Aorta (tissue), 5 donors: ENCODE measurements at regions of chr15 and their contacts with region 1.

Region 1: DNA sequence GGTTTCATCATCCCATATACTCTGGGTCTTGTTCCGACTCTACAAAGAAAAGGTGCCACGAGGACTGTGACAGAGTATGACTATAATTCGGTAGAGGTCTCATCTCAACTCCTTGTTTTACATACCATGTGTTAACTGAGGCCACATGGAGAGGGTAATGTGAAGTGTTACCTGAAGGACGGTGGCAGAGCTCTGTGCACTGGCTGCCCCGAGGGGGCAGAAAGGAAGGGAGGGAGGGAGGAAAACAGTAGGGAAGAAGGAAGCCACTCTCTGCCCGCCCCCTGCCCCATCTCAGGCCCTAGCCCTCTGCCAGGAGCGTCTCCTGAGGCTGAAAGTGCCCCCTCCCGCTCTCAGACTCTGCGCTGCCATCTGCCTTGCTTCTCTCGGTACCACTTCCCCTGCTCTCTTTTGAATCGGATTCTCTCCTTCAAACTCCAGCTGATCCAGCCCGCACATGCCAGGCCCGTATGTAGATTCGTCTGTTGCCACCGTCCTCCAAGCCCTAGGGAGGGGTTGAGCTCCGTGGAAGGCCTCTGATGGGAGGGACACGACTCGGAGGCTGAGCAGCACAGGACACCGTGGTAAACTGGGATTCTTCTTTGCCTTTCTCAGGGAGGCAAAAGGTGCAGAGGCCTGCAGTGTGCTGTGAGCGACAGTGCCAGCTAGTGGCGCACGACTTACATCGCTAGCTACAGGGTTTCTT is 70.5 kb upstream of the ATP10A start:
- DNase-seq: peak; percentile 88 to 91
- ATAC-seq: peak; percentile 92
- H3K4me3 ChIP-seq: peak overlapping the region in 1 of 2 donors; percentile 16
- H3K27ac ChIP-seq: no peak overlapping the region
- H3K4me1 ChIP-seq: no peaks in the 10 kb centered on the region
- H3K27me3 ChIP-seq: no peaks in the 10 kb centered on the region

Region 2: DNA sequence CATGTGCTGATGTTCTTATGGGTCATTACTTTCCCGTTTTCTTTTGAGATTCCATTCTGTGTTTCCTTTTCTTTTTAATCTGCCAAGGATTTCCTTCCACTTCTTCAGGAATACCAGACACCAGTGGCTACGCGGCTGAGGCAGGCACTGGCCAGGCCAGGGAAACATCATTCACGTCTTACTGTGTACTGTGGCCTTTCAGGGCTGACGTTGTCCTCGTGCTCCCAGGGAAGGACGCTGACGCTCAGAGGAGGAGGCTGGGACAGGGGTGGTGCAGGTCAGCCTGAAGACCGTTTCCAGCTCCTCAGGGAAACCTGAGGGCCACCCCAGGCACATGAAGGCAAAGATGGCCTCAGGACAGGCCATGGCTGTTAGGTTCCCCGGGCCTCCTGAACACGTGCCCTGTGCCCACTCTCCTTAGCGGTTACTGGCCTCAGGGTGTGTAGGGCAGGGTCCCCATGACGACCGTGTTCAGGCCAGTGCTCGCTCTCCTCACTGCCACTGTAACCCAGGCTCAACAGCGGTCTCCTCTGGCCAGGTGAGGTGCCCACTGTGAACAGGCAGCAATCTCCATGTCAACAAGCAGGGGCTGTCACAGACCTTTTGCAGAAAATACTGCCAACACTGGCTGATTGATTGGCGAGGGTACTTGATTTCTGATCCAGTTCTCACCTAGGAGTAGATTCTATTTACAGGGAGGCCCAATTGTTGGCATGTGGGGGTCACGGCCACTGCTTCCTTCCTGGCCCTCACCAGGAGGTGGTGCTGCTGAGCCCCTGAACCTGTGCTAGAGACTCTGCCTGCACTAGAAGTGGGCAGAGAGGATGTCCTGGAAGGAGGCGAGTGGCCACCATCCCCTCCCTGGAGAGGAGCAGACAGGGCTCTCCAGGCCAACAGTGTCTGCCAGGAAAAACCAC is 240.0 kb before region 1 on chr15:
- intact Hi-C with region 1: loop called (anchors 5 to 10 kb)
- DNase-seq: peak; percentile 62 to 81
- ATAC-seq: peak; percentile 73
- H3K4me3 ChIP-seq: no peak overlapping the region
- H3K27ac ChIP-seq: no peak overlapping the region
- H3K4me1 ChIP-seq: no peaks in the 10 kb centered on the region
- H3K27me3 ChIP-seq: no peaks in the 10 kb centered on the region

Region 3: GRCh38 chr15:25733036-25733855 is 200.4 kb before region 1 on chr15:
- intact Hi-C with region 1: loop called in 1 of 2 experiments (anchors 5 kb)
- DNase-seq: no peak
- ATAC-seq: no peak
- H3K4me3 ChIP-seq: no peak overlapping the region
- H3K27ac ChIP-seq: peak overlapping the region in 1 of 2 donors; percentile 5
- H3K4me1 ChIP-seq: peaks cover 0 to 11% of the 10 kb centered on the region in 2 donors
- H3K27me3 ChIP-seq: no peaks in the 10 kb centered on the region

Region 4: GRCh38 chr15:25775317-25775912 is 158.2 kb before region 1 on chr15:
- intact Hi-C with region 1: no loop called
- DNase-seq: peak; percentile 57 to 77
- ATAC-seq: no peak
- H3K4me3 ChIP-seq: no peak overlapping the region
- H3K27ac ChIP-seq: peak overlapping the region in 1 of 2 donors; percentile 0
- H3K4me1 ChIP-seq: no peaks in the 10 kb centered on the region
- H3K27me3 ChIP-seq: no peaks in the 10 kb centered on the region